Right ventricle myocardium superior (tissue), 1 donor: ENCODE measurements at regions of chr18 and their contacts with region 1.

Region 1: DNA sequence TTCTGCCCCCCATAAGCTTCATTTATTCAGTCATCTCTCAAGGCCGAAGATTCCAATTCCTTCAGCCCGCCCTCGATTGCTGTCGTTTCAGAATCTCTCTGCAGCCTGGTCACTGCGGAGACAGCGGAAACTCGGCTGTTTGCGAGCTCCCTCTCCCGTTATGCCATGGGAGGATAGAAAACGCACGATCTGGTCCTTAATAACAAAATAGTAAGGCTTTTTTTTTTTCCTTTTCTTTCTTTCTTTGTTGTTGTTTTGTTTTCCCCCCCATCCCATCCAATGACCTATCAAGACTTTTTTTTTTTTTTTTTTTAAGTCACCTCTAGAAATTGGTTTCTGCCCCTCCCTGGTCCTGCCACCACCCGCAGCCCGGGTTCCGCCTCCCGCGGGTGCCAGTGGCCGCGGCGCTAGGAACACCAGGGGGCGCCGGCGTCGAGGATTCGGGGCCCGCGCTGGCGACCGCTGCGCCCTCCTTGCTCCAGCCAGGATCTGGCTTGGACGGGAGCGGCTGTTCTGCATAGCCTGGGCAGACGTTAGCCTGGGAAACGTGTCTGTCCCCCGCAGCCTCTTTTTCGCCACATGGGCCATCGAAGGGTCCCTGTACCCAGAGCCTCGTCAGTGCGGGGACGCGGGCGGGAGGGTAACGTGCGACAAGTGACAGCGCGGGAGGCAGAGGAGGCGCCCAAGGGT is 10.1 kb downstream of the CPLX4 start:
- DNase-seq: peak; percentile 87
- ATAC-seq: peak; percentile 100

Region 2: GRCh38 chr18:59109375-59109774 is 199.0 kb before region 1 on chr18:
- intact Hi-C with region 1: no loop called
- DNase-seq: no peak
- ATAC-seq: no peak

Region 3: GRCh38 chr18:59402432-59403090 is 94.2 kb after region 1 on chr18:
- intact Hi-C with region 1: loop called (anchors 2 kb)
- DNase-seq: peak; percentile 71
- ATAC-seq: peak; percentile 96